HCT116 (cell line): ENCODE measurements at regions of chr15 and their contacts with region 1.

Region 1: DNA sequence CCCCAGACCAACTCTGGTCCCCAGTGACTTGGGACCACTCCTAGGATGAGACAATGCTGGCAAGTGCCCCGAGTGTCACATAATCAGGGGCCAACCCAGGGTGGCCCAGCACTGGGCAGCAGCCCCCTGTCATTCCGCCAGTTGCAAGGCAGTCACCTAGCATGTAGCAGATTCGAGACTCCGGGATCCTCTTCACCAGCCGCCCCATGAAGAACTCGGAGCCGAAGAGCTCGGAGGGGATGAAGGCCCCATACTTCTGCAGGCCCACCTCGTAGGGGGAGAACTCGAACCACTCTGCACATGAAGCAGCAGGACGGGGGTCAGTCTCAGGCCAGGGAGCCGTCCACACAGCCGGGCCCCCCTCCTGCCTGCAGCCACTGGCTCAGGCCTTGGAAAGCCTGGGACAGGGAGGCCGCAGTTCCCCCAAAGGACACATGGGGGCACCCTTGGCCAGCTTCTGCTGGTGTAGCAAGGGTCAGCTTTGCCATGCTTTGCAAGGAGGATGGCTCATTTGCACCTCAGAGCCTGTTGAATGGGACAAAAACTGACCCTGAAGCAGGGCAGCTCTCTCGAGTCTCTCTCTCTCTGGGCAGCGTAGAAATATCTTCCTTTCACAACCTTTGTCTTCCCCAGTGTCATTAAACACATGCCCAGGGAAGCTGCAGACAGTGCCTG is 17.0 kb upstream of the EHD4 start:
- DNase-seq: peak; percentile 55
- ATAC-seq: peak; percentile 99
- H3K4me3 ChIP-seq: no peak overlapping the region
- H3K27ac ChIP-seq: no peak overlapping the region
- H3K4me1 ChIP-seq: no peaks in the 10 kb centered on the region
- H3K27me3 ChIP-seq: no peaks in the 10 kb centered on the region
- CTCF ChIP-seq: peak; percentile 95 to 98 (median 96)
- POLR2A ChIP-seq: no peak
- RAD21 ChIP-seq: peak; percentile 99

Region 2: DNA sequence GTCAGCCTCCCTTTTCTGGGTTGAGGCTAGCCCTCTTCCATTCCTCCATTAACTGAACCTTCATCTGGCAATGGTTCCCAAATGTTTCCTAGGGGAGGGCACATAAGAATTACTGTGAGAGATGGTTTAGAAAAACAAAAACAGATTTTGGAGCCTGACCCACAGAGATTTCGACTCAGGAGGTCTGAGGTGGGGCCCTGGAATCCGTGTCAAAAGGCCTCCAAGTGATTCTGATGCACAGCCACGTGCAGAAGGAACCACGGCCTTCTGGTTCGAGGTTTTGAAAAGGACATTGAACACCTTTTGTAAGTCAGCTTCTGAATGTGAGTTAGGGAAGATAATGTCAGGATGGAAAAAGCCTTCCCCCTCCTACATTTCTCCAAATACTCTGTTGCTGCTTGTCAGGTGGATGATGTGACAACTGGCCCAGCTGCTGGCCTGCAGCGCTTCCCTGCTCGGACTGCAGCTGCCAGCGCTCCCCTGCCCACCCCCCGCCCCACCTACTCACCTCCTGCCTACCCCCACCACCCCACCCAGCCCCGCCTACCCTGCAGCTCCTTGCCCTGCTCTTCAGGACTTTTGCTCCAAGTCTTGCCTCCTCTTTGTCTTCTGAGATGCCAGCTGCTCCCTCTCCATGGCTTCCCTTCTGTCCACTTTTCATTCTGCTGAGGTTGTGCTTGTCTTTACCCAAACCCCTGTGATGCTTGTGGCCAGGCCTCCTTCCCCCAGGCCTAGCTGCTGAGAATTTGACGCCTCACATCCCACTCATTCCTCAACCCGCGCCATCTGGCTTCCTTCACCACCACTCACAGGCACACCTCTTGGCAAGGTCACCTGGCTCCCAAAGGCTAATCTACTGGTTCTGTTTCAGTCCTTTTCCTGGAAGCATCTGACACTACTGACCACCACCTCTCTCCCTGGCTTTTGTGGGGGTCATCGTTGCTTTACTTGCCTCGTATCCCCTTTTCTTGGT is 23.7 kb before region 1 on chr15:
- CTCF ChIA-PET with region 1: no interaction called
- POLR2A ChIA-PET with region 1: no interaction called
- RAD21 ChIA-PET with region 1: no interaction called
- intact Hi-C with region 1: no loop called
- DNase-seq: no peak
- ATAC-seq: no peak
- H3K4me3 ChIP-seq: no peak overlapping the region
- H3K27ac ChIP-seq: no peak overlapping the region
- H3K4me1 ChIP-seq: peaks cover 12 to 31% of the 10 kb centered on the region in 2 experiments; a peak in 3 of 4 replicates
- H3K27me3 ChIP-seq: no peaks in the 10 kb centered on the region
- CTCF ChIP-seq: no peak
- POLR2A ChIP-seq: no peak
- RAD21 ChIP-seq: no peak

Region 3: GRCh38 chr15:42056934-42057779 is 67.8 kb after region 1 on chr15:
- CTCF ChIA-PET with region 1: interaction called, 20 read pairs
- POLR2A ChIA-PET with region 1: interaction called, 4 read pairs
- RAD21 ChIA-PET with region 1: interaction called in 1 of 2 experiments, 4 read pairs
- intact Hi-C with region 1: loop called (anchors 1 kb)
- DNase-seq: peak; percentile 95
- ATAC-seq: peak; percentile 88
- H3K4me3 ChIP-seq: peak overlapping the region; percentile 47 to 54
- H3K27ac ChIP-seq: peak overlapping the region; percentile 61
- H3K4me1 ChIP-seq: peaks cover 8 to 26% of the 10 kb centered on the region in 2 experiments
- H3K27me3 ChIP-seq: no peaks in the 10 kb centered on the region
- CTCF ChIP-seq: peak; percentile 64 to 74 (median 68)
- POLR2A ChIP-seq: peak; percentile 62
- RAD21 ChIP-seq: peak; percentile 73

Region 4: DNA sequence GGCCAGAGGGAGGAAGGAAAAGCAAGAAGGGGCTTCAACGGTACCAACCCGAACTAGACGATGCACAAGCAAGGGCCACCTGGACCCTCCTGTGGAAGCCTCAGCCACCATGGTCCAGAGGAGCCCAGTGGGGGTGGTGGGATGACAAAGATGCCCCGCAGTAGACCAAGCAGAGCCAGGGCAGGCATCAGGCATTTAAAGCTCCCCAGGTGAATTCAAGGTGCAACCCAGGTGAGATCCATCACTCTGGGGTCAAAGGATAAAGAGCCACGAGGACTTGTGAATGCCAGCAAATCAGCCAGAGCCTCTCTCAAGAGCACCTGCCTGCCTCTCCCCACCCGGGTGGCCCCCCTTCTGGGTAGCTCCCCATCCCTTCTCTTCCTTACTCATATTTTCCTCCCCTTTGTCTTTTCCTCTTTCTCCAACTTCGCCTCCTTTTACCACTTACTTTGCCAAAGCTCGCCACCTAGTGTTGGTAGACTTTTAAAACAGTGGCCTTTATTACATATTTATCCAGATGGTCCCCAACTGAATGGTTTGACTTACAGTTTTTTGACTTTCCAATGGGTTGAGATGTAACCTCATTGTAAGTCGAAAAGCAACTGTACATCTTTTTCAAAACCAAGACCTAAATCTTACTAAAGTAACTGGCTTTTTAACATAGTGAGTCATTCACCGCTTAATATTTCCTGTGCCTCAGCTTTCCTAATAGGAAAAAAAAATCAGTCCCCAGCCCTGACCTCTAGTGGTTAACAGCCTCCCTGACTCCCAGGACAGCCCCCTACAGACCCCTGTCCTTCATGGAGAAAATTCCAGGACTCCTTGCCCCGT is 148.2 kb after region 1 on chr15:
- CTCF ChIA-PET with region 1: interaction called, 47 read pairs
- POLR2A ChIA-PET with region 1: no interaction called
- RAD21 ChIA-PET with region 1: interaction called, 5 to 7 read pairs
- intact Hi-C with region 1: loop called (anchors 1 kb)
- DNase-seq: peak; percentile 57
- ATAC-seq: peak; percentile 70
- H3K4me3 ChIP-seq: no peak overlapping the region
- H3K27ac ChIP-seq: no peak overlapping the region
- H3K4me1 ChIP-seq: peaks cover 5 to 8% of the 10 kb centered on the region in 2 experiments; a peak in 3 of 4 replicates
- H3K27me3 ChIP-seq: no peaks in the 10 kb centered on the region; the same call in 1 of the 2 replicates
- CTCF ChIP-seq: peak; percentile 58 to 94 (median 71)
- POLR2A ChIP-seq: no peak
- RAD21 ChIP-seq: peak; percentile 80

Region 5: DNA sequence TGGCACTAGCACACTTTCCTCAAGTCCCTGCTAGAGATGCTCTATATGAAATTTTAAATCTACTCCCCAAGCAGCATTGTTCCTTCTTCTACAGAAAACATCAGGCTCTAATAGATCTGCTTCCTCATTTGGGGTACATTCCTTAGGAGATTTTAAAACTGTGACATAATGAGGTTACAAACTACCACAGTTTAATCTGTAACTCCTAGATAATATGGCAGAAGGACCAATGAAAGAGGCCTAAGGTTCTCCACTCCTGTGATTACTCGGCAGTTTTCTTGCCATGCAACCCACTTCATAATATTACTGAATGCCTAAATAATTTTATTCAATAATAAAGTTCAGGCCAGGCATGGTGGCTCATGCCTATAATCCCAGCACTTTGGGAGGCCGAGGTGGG is 485.4 kb after region 1 on chr15:
- CTCF ChIA-PET with region 1: no interaction called
- POLR2A ChIA-PET with region 1: no interaction called
- RAD21 ChIA-PET with region 1: no interaction called
- intact Hi-C with region 1: loop called (anchors 2 kb)
- DNase-seq: no peak
- ATAC-seq: no peak
- H3K4me3 ChIP-seq: no peak overlapping the region
- H3K27ac ChIP-seq: no peak overlapping the region
- H3K4me1 ChIP-seq: no peaks in the 10 kb centered on the region
- H3K27me3 ChIP-seq: no peaks in the 10 kb centered on the region
- CTCF ChIP-seq: no peak
- POLR2A ChIP-seq: no peak
- RAD21 ChIP-seq: no peak